Prostate gland (tissue), 2 donors: ENCODE measurements at regions of chr11 and their contacts with region 1.

Region 1: GRCh38 chr11:61733120-61733978 is 19.1 kb upstream of the MYRF start:
- DNase-seq: peak; percentile 88
- H3K4me3 ChIP-seq: no peak overlapping the region
- H3K27ac ChIP-seq: peak overlapping the region; percentile 36 to 42
- H3K4me1 ChIP-seq: no peaks in the 10 kb centered on the region
- H3K27me3 ChIP-seq: no peaks in the 10 kb centered on the region
- CTCF ChIP-seq: peak; percentile 99 to 100 (median 100)
- POLR2A ChIP-seq: no peak

Region 2: DNA sequence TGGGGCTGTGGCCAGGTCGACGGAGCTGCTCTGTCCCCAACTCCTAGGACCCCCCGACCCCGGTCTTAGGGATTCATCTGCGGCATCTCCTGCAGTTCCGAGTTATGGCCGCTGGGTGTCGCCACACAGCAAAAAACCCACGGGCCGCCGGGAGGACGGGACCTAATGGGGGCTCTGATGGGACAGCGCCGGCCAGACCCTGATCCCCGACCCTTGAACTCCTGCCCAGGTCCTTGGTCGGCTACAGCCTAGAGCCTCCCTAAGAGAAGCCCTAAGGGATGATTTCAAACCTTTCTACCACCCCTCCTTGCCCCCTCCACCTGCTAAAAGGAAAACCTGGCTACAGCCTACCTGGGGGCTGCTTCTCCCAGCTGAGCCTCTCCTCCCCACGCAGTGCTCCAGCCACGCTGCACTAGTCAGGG is 255.6 kb before region 1 on chr11:
- intact Hi-C with region 1: loop called (anchors 10 kb)
- DNase-seq: peak; percentile 22
- H3K4me3 ChIP-seq: no peak overlapping the region
- H3K27ac ChIP-seq: no peak overlapping the region
- H3K4me1 ChIP-seq: no peaks in the 10 kb centered on the region
- H3K27me3 ChIP-seq: no peaks in the 10 kb centered on the region
- CTCF ChIP-seq: peak; percentile 88 to 97 (median 90)
- POLR2A ChIP-seq: no peak

Region 3: DNA sequence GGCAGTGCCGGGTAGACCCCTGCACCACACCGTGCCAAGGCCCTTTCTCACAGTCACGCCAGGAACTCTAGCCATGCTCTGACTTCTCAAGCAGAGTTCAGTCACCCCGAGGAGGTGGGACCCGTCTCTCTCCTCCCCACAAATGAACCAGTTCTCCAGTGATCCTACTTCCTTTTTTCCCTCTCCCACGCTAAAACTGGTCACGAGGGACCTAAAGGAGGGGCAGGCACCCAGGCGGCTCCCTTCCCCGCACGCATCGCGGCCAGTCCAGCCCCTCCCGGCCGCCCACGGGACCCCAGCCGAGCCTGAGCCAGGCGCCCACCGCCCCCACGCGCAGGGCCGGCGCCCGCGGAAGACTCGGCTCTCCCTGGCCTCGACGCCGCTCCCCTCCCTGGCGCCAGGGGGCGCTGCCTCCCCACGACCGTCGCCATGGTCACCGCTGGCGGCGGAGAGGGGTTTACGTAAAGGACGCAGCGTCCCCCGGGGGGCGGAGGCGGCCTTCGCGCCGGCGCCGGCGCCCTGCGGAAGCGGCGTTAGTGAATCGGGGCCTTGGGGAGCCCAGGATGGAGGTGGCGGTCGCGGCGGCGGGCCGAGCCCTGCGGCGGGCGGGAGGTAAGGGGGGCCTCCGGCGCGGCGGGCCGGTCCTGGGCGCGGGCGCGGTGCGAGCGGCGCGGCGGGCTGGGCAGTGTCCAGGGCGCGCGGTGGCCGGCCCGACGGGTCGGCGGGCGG is 53.3 kb before region 1 on chr11 and contains the start of gene DAGLA:
- intact Hi-C with region 1: loop called (anchors 2 kb)
- DNase-seq: peak; percentile 60
- H3K4me3 ChIP-seq: peak within 1 kb of the TSS; percentile 46 to 53
- H3K27ac ChIP-seq: peak within 1 kb of the TSS; percentile 26 to 60
- H3K4me1 ChIP-seq: peaks cover 12% of the 10 kb centered on the region
- H3K27me3 ChIP-seq: no peaks in the 10 kb centered on the region
- CTCF ChIP-seq: peak; percentile 94 to 100 (median 96)
- POLR2A ChIP-seq: no peak
- total RNA-seq, gene DAGLA: 10.8 to 12.2 TPM

Region 4: GRCh38 chr11:61695917-61696316 is 37.4 kb before region 1 on chr11:
- intact Hi-C with region 1: loop called (anchors 5 kb)
- DNase-seq: peak; percentile 83
- H3K4me3 ChIP-seq: peak overlapping the region in 1 of 2 donors; percentile 13
- H3K27ac ChIP-seq: peak overlapping the region; percentile 98
- H3K4me1 ChIP-seq: peaks cover 76% of the 10 kb centered on the region
- H3K27me3 ChIP-seq: no peaks in the 10 kb centered on the region
- CTCF ChIP-seq: peak in 2 of 4 experiments; percentile 41 to 54
- POLR2A ChIP-seq: peak; percentile 36